ENCODE measurements at regions of chr11 and their contacts with region 1.

Region 1: DNA sequence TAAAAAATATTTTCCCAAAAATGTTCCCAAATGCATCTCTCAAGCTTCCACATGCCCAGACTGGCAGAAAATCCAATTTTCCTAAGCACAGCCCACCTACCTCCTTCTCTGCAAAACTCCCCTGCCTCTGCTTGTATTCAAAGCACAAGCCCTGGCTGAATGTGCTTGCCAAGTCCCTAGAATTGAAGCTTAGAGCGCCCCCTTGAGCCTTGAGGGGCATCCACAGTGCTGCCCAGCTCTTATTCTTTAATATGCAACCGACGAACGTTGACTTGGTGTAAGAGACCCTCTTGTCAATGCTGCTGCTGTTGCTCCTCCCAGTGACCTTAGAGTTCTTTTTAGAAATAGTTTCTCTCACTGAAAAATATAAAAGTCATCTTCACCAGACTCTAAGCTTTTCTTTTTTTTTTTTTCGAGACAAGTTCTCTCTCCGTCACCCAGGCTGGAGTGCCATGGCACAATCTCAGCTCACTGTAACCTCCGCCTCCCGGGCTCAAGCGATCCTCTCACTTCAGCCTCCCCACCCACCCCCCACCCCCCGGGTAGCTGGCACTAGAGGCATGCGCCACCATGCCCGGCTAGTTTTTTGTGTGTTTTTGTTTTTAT is 63.5 kb upstream of the CAPRIN1 start:
- DNase-seq: peak; percentile 85
- H3K4me3 ChIP-seq: no peak overlapping the region
- H3K27ac ChIP-seq: no peak overlapping the region
- H3K4me1 ChIP-seq: peaks cover 0 to 10% of the 10 kb centered on the region in 2 experiments; a peak in 1 of 4 replicates
- H3K27me3 ChIP-seq: peaks cover 7% of the 10 kb centered on the region; the same call in 1 of the 2 replicates
- CTCF ChIP-seq: peak; percentile 93
- EP300 ChIP-seq: no peak
- RAD21 ChIP-seq: peak; percentile 86

Region 2: GRCh38 chr11:33835143-33835878 is 152.8 kb before region 1 on chr11:
- CTCF ChIA-PET with region 1: interaction called, 43 read pairs
- POLR2A ChIA-PET with region 1: no interaction called
- DNase-seq: peak; percentile 39
- H3K4me3 ChIP-seq: no peak overlapping the region; a peak in 1 of 4 replicates
- H3K27ac ChIP-seq: no peak overlapping the region
- H3K4me1 ChIP-seq: peaks cover 0 to 23% of the 10 kb centered on the region in 2 experiments; a peak in 2 of 4 replicates
- H3K27me3 ChIP-seq: peaks cover 17% of the 10 kb centered on the region; the same call in 1 of the 2 replicates
- CTCF ChIP-seq: peak; percentile 60
- EP300 ChIP-seq: no peak
- RAD21 ChIP-seq: peak; percentile 70

Region 3: DNA sequence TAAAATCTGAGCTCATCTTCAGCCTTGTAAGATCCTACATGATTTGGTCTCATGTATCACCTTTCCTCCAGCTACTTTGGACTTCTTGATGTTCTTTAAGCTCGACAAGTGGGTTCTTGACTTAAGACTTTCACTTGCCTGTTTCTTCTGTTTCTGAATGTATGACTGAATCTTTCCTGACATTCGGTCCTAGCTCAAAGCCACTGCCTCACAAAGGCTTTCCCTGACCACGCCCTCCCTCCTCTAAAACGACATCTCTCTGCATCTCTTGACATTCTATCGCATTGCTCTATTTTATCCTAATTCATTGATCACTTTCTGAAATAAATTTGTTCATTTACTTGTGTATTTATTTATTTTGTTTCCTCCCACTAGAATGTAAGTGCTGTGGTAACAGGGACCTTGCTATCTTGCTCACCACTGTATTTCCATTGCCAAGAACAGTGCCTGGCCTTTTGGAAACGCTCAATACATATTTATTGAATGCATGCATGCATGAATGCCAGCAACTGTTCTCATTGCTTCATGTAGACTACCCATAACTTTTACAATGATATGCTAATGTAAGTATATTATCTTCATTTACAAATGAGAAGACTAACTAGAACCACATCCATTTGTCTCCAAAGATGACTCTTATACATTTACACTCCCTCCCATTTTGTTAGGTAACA is 139.2 kb before region 1 on chr11:
- CTCF ChIA-PET with region 1: interaction called, 13 read pairs
- POLR2A ChIA-PET with region 1: no interaction called
- DNase-seq: no peak
- H3K4me3 ChIP-seq: no peak overlapping the region
- H3K27ac ChIP-seq: no peak overlapping the region
- H3K4me1 ChIP-seq: no peaks in the 10 kb centered on the region; a peak in 1 of 4 replicates
- H3K27me3 ChIP-seq: peaks cover 39% of the 10 kb centered on the region
- CTCF ChIP-seq: no peak
- EP300 ChIP-seq: no peak
- RAD21 ChIP-seq: no peak

Region 4: GRCh38 chr11:33869481-33870422 is 118.3 kb before region 1 on chr11:
- CTCF ChIA-PET with region 1: interaction called, 30 read pairs
- POLR2A ChIA-PET with region 1: no interaction called
- DNase-seq: peak; percentile 84
- H3K4me3 ChIP-seq: peak overlapping the region; percentile 60 to 63
- H3K27ac ChIP-seq: no peak overlapping the region
- H3K4me1 ChIP-seq: peaks cover 7% of the 10 kb centered on the region in 2 experiments; a peak in 2 of 4 replicates
- H3K27me3 ChIP-seq: peaks cover 72% of the 10 kb centered on the region
- CTCF ChIP-seq: no peak
- EP300 ChIP-seq: no peak
- RAD21 ChIP-seq: no peak

Region 5: GRCh38 chr11:33976495-33977199 is 11.4 kb before region 1 on chr11:
- CTCF ChIA-PET with region 1: interaction called, 30 read pairs
- POLR2A ChIA-PET with region 1: no interaction called
- DNase-seq: no peak
- H3K4me3 ChIP-seq: no peak overlapping the region
- H3K27ac ChIP-seq: no peak overlapping the region
- H3K4me1 ChIP-seq: peaks cover 0 to 11% of the 10 kb centered on the region in 2 experiments; a peak in 1 of 4 replicates
- H3K27me3 ChIP-seq: peaks cover 8% of the 10 kb centered on the region; the same call in 1 of the 2 replicates
- CTCF ChIP-seq: no peak
- EP300 ChIP-seq: no peak
- RAD21 ChIP-seq: no peak

Region 6: DNA sequence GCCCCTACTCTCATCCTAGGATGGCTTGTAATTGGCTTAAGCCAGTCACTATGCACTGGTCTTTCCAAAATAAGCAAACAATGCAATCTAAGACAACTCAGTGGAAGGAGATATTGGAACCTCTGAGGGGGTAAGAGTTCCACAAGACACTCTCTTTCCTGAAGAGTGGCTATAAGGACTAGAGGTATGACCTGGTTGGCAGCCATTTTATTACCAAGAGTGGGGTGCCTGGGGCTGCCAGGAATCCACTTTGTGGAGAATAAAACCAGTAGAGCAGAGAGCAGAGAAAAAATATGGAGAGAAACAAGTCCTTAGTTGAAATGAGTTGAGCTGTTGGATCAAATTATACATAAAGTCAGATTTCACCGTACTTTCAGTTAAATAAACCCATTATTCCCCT is 24.7 kb after region 1 on chr11:
- CTCF ChIA-PET with region 1: no interaction called
- POLR2A ChIA-PET with region 1: no interaction called
- DNase-seq: no peak
- H3K4me3 ChIP-seq: no peak overlapping the region
- H3K27ac ChIP-seq: no peak overlapping the region
- H3K4me1 ChIP-seq: no peaks in the 10 kb centered on the region
- H3K27me3 ChIP-seq: no peaks in the 10 kb centered on the region; the same call in 1 of the 2 replicates
- CTCF ChIP-seq: no peak
- EP300 ChIP-seq: no peak
- RAD21 ChIP-seq: no peak